ENCODE measurements at regions of chr5 and their contacts with region 1.

Region 1: DNA sequence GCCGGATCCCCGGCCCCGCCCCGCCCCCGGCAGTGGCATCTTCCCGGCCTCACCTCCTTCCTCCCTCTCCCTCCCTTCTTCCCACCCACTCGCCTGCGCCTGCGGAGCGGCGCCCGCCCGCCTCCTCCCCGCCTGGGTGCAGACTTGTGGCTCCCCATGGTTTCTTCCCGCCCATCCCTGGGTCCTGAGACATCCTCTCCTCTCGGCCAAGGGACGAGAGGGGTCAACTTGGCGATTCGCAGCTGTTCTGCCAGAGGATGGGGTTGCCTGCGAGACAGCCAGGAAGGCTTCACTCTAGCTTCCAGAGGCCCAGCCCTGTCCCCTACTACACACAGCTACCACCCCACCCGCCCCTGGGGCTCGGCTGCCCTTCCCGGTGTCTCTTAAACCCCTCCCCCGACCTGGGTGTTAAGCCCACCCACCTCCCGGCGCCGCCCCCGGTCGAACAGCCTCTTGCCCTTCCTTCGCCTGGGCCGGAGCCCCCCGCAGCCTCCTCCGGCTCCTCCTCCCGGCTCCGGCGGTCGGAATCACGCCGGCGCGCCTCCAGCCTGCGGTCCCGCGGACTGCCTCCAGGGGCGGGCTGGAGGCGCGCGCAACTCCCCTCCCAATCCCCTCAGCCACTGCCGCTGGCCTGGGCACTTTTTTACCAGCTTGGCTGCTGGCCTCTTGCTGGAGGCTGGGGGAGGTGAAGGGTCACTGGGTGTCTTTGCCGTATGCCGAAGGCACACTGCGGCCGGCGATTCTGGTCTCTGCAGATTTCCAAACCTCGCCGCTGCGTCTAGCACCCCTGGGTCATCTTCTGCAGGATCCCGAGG is 1.9 kb downstream of the JADE2 start:
- DNase-seq: peak; percentile 87
- ATAC-seq: peak; percentile 51
- H3K4me3 Mint-ChIP-seq: peak overlapping the region; percentile 99
- H3K27ac Mint-ChIP-seq: peak overlapping the region; percentile 89
- H3K4me1 Mint-ChIP-seq: peaks cover 49% of the 10 kb centered on the region
- H3K27me3 Mint-ChIP-seq: no peaks in the 10 kb centered on the region

Region 2: DNA sequence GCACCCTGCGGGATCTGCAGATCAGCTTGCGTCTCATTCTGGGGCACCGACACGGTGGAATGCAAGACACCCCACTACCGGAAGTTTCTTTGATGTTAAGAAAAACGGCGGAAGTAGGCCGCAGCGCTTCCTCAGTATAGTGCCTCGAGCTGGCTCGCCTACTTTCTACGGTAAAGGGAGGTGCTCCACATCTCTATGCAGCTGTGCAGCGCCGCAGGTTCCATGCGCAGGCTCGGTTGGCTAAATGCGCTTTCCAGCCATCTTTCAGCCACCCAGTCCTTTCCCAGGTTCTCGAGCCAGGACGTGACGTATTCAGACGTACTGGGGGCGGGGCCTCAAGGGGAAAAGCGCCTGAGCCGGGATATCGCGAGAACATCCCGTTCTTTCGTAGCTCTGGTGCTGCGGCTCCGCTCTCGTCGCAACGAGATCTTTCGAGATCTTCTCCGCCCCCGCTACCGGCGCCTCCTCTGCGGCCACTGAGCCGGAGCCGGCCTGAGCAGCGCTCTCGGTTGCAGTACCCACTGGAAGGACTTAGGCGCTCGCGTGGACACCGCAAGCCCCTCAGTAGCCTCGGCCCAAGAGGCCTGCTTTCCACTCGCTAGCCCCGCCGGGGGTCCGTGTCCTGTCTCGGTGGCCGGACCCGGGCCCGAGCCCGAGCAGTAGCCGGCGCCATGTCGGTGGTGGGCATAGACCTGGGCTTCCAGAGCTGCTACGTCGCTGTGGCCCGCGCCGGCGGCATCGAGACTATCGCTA is 1475.6 kb before region 1 on chr5 and contains the start of gene HSPA4:
- CTCF ChIA-PET with region 1: no interaction called
- POLR2A ChIA-PET with region 1: no interaction called
- intact Hi-C with region 1: loop called in 1 of 2 experiments (anchors 1 kb)
- DNase-seq: peak; percentile 99
- ATAC-seq: peak; percentile 89
- H3K4me3 Mint-ChIP-seq: peak within 1 kb of the TSS; percentile 98
- H3K27ac Mint-ChIP-seq: peak within 1 kb of the TSS; percentile 100
- H3K4me1 Mint-ChIP-seq: peaks cover 44% of the 10 kb centered on the region
- H3K27me3 Mint-ChIP-seq: no peaks in the 10 kb centered on the region
- total RNA-seq, gene HSPA4: 243 to 268 TPM

Region 3: DNA sequence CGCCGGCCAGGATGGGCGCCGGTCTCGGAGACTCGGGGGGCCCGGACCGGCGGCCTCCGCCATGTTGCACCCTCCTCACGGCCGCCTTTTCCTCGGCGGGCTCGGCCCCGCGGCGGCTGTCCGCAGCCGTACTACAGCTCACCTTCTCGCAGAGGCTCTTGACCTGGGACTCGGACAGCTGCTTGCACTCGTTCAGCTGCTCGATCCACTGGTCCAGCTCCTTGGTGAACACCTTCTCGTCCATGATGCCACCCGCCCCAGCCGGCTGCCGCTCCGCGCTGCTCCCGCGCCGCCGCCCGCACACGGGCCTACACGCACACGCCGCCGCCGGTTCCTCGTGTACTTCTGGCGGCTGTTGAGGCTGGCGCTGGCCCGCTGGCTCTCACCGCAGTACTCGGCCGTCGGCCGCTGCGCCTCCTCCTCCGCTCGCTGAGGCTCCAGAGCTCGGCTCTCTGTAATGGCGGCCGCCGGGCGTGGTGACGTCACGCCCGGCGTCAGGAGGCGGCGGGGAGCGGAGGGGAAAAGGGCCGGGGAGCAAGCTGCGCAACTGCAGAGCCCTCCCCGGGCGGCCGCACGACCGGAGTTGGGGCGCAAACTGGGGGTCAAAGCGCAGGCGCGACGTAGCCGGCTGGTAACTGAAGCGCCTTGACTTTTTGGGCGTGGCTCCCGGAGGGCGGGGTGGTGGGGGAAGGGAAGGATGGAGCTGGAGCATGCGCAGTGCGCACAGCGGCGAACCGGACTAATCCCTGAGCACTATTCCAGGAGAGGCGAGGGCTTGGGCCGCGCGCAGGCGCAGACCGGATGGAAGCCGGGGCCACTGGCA is 301.5 kb before region 1 on chr5 and contains the start of gene PPP2CA:
- CTCF ChIA-PET with region 1: no interaction called
- POLR2A ChIA-PET with region 1: interaction called, 7 read pairs
- intact Hi-C with region 1: loop called (anchors 1 to 5 kb)
- DNase-seq: peak; percentile 99
- ATAC-seq: peak; percentile 88
- H3K4me3 Mint-ChIP-seq: peak within 1 kb of the TSS; percentile 97
- H3K27ac Mint-ChIP-seq: peak within 1 kb of the TSS; percentile 98
- H3K4me1 Mint-ChIP-seq: peaks cover 47% of the 10 kb centered on the region
- H3K27me3 Mint-ChIP-seq: no peaks in the 10 kb centered on the region
- total RNA-seq, gene PPP2CA: 148 to 154 TPM

Region 4: GRCh38 chr5:134249469-134250379 is 277.6 kb before region 1 on chr5:
- CTCF ChIA-PET with region 1: no interaction called
- POLR2A ChIA-PET with region 1: no interaction called
- intact Hi-C with region 1: no loop called
- DNase-seq: no peak
- ATAC-seq: no peak
- H3K4me3 Mint-ChIP-seq: no peak overlapping the region
- H3K27ac Mint-ChIP-seq: no peak overlapping the region
- H3K4me1 Mint-ChIP-seq: no peaks in the 10 kb centered on the region
- H3K27me3 Mint-ChIP-seq: peaks cover 4% of the 10 kb centered on the region

Region 5: DNA sequence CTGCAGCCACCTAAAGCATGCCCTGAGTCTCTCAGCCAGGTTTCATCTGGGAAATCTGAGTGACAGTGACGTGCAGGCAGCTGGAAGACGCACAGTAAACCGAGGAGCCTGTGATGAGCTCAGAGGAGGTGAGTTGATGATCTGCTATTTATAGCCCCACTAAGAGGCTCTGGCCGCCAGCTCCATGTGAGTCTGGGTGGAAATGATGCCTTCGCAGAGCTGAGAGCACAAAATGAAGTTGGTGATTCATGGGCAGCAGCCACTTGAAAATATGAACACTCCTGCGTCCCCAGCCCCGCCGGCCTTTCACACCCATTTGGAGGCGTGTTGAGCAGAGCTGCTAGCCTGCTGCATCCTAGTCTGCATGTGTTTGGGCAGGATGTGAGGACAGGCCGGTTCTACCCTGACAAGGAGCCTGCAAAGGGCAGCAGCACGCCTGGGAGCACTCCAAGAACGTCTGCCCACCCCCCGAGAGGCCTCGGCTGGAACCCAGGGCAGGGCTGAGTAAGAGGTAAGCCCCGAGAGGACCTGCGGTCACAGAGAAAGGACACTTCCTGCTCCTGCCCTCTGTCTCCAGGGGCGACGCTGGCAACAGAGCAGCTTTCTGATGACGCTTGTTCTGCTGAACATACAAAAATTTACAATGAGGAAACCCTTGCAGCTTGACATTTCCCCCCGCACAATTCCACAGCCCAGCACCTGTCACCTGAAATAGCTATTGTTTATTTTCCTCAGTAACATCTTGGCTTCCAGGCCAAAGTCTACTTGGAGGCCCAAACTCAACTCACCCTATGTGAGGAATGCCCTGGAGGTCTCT is 90.6 kb before region 1 on chr5:
- CTCF ChIA-PET with region 1: no interaction called
- POLR2A ChIA-PET with region 1: no interaction called
- intact Hi-C with region 1: loop called in 1 of 2 experiments (anchors 1 kb)
- DNase-seq: peak; percentile 78
- ATAC-seq: peak; percentile 80
- H3K4me3 Mint-ChIP-seq: no peak overlapping the region
- H3K27ac Mint-ChIP-seq: peak overlapping the region; percentile 32
- H3K4me1 Mint-ChIP-seq: peaks cover 35% of the 10 kb centered on the region
- H3K27me3 Mint-ChIP-seq: no peaks in the 10 kb centered on the region

Region 6: GRCh38 chr5:134543820-134544614 is 16.7 kb after region 1 on chr5:
- CTCF ChIA-PET with region 1: interaction called, 9 read pairs
- POLR2A ChIA-PET with region 1: interaction called, 7 read pairs
- intact Hi-C with region 1: loop called in 1 of 2 experiments (anchors 1 kb)
- DNase-seq: peak; percentile 71
- ATAC-seq: peak; percentile 79
- H3K4me3 Mint-ChIP-seq: peak overlapping the region; percentile 71
- H3K27ac Mint-ChIP-seq: peak overlapping the region; percentile 96
- H3K4me1 Mint-ChIP-seq: peaks cover 72% of the 10 kb centered on the region
- H3K27me3 Mint-ChIP-seq: no peaks in the 10 kb centered on the region

Region 7: DNA sequence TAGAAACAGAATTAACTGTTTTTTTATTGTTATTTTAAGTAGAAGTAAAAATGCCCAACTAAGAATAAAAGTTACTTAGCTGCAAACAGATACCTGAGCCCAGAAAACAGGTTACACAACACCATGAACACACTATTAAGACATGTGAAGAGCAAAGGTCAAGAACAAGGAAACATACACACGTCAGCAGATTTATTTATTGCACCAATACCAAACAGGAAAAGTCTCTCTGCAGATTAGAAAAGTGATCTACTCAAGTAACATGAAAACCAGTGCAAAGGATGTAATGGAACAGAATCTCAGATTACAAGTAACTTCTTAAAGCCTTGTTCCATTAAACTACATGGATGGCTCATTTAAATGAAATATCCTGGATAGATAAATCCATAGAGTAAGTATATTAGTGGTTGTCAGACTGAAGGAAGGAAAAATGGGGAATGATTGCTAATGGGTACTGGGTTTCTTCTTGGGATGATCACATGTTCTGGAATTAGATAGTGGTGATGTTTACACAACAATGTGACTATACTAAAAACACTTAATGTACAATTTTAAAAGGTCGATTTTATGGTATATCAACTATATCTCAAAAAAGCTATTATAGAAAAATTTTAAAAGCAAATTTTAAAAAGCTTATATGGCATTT is 99.1 kb after region 1 on chr5:
- CTCF ChIA-PET with region 1: no interaction called
- POLR2A ChIA-PET with region 1: no interaction called
- intact Hi-C with region 1: no loop called
- DNase-seq: no peak
- ATAC-seq: no peak
- H3K4me3 Mint-ChIP-seq: no peak overlapping the region
- H3K27ac Mint-ChIP-seq: peak overlapping the region; percentile 29
- H3K4me1 Mint-ChIP-seq: peaks cover 22% of the 10 kb centered on the region
- H3K27me3 Mint-ChIP-seq: no peaks in the 10 kb centered on the region

Region 8: DNA sequence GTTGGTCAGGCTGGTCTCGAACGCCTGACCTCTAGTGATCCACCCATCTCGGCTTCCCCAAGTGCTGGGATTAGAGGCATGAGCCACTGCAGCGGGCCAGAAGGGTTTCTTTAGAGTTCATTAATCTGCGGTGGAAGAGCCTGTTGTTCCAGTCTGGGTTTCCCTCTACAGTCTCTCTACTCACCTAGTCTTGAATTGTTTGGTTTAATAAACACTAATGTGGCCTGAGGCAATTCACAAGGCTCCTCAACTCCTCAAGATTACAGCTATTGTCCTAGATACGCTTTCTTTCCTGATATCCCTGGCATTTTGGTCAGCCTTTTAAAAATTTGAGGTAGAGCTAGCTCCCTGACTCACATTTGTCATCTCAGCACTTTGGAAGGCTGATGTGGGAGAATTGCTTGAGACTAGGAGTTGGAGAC is 109.8 kb after region 1 on chr5:
- CTCF ChIA-PET with region 1: no interaction called
- POLR2A ChIA-PET with region 1: interaction called, 3 read pairs
- intact Hi-C with region 1: loop called in 1 of 2 experiments (anchors 1 kb)
- DNase-seq: no peak
- ATAC-seq: no peak
- H3K4me3 Mint-ChIP-seq: no peak overlapping the region
- H3K27ac Mint-ChIP-seq: no peak overlapping the region
- H3K4me1 Mint-ChIP-seq: peaks cover 6% of the 10 kb centered on the region
- H3K27me3 Mint-ChIP-seq: no peaks in the 10 kb centered on the region

Region 9: DNA sequence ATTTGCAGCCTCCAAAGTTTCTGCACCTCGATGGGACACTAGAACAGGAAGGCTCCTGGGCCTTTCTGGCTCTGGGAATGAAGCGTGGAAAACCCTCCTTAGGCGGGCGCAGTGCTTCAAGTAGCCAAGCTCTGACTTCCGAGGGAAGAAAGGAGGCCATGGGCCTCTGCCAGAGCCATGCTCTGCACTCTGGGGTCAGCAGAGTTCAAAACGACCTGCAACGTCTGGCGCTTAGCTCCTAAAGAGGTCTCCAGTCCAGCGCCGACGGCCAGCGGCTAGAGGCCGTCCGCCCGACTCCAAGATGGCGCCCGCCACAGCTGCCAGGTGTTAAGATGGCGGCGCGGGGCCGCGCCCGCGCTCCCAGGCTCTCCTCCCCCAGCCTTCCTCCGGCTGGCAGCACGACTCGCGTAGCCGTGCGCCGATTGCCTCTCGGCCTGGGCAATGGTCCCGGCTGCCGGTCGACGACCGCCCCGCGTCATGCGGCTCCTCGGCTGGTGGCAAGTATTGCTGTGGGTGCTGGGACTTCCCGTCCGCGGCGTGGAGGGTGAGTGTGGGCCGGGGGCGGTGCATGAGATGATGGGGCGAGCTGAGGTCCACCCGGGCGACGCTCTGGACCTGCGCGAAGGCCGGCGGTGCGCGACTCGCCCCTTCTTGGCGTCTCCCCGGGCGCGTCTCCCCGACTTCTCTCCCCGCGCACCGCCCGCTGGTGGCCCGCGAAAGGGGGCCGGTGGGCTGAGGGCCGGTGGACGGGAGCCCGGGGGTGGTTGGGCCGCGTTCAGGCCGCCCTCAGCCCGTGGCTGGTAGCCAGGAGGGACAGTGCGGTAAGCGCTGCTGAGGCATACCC is 346.9 kb after region 1 on chr5 and contains the start of gene TXNDC15:
- CTCF ChIA-PET with region 1: no interaction called
- POLR2A ChIA-PET with region 1: no interaction called
- intact Hi-C with region 1: loop called in 1 of 2 experiments (anchors 10 kb)
- DNase-seq: peak; percentile 90
- ATAC-seq: peak; percentile 83
- H3K4me3 Mint-ChIP-seq: peak within 1 kb of the TSS; percentile 88
- H3K27ac Mint-ChIP-seq: peak within 1 kb of the TSS; percentile 97
- H3K4me1 Mint-ChIP-seq: peaks cover 37% of the 10 kb centered on the region
- H3K27me3 Mint-ChIP-seq: no peaks in the 10 kb centered on the region
- total RNA-seq, gene TXNDC15: 16.6 to 29.1 TPM